Caco-2 (cell line): ENCODE measurements at regions of chr9 and their contacts with region 1.

Region 1: GRCh38 chr9:38371495-38371894 is 21.0 kb upstream of the ALDH1B1 start:
- DNase-seq: peak; percentile 69 to 73
- H3K4me3 ChIP-seq: no peak overlapping the region
- H3K4me3 Mint-ChIP-seq: no peak overlapping the region
- H3K27ac Mint-ChIP-seq: no peak overlapping the region
- H3K4me1 ChIP-seq: no peaks in the 10 kb centered on the region
- H3K4me1 Mint-ChIP-seq: no peaks in the 10 kb centered on the region
- H3K27me3 ChIP-seq: no peaks in the 10 kb centered on the region
- H3K27me3 Mint-ChIP-seq: no peaks in the 10 kb centered on the region
- CTCF ChIP-seq: peak; percentile 63 to 67

Region 2: GRCh38 chr9:38392235-38393127 is 21.0 kb after region 1 on chr9 and contains the start of gene ALDH1B1:
- CTCF ChIA-PET with region 1: no interaction called
- POLR2A ChIA-PET with region 1: no interaction called
- intact Hi-C with region 1: loop called (anchors 2 kb)
- DNase-seq: peak; percentile 89 to 93
- H3K4me3 ChIP-seq: peak within 1 kb of the TSS; percentile 95
- H3K4me3 Mint-ChIP-seq: peak within 1 kb of the TSS; percentile 80
- H3K27ac Mint-ChIP-seq: peak within 1 kb of the TSS; percentile 89
- H3K4me1 ChIP-seq: peaks cover 9% of the 10 kb centered on the region
- H3K4me1 Mint-ChIP-seq: peaks cover 20% of the 10 kb centered on the region
- H3K27me3 ChIP-seq: no peaks in the 10 kb centered on the region
- H3K27me3 Mint-ChIP-seq: no peaks in the 10 kb centered on the region
- CTCF ChIP-seq: peak; percentile 13 to 44
- total RNA-seq, gene ALDH1B1: 35.7 and 38.3 TPM in 2 replicates

Region 3: GRCh38 chr9:38405785-38406184 is 34.3 kb after region 1 on chr9:
- CTCF ChIA-PET with region 1: interaction called, 14 read pairs
- POLR2A ChIA-PET with region 1: no interaction called
- intact Hi-C with region 1: loop called (anchors 1 kb)
- DNase-seq: no peak
- H3K4me3 ChIP-seq: no peak overlapping the region
- H3K4me3 Mint-ChIP-seq: no peak overlapping the region
- H3K27ac Mint-ChIP-seq: no peak overlapping the region
- H3K4me1 ChIP-seq: no peaks in the 10 kb centered on the region
- H3K4me1 Mint-ChIP-seq: no peaks in the 10 kb centered on the region
- H3K27me3 ChIP-seq: no peaks in the 10 kb centered on the region; the same call in 1 of the 2 replicates
- H3K27me3 Mint-ChIP-seq: peaks cover 11% of the 10 kb centered on the region
- CTCF ChIP-seq: no peak

Region 4: DNA sequence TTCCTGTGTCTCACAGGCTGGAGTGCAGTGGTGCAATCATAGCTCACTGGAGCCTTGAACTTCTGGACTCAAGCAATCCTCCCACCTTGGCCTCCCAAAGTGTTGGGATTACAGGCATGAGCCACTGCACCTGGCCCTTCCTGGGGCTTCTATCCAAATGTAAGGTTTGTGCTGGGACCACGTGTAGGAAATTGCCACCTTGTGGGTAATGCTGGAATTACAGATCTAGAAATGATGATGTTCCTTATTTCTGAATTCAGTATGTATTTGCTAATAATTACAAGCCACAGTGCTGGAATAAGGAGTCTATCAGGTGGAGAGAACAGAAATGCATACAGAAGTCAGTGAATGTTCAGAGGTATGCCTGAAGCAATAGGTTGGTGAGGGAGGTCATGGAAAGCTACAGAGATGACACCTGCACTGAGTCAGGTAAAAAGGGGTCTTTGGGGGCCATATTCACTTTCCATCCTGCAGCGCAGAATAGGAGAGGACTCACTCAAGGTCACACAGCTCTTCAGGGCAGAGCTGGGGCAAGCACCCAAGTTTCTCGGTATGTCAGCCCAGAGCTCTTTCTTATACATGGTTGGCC is 61.5 kb after region 1 on chr9:
- CTCF ChIA-PET with region 1: no interaction called
- POLR2A ChIA-PET with region 1: no interaction called
- intact Hi-C with region 1: loop called (anchors 1 kb)
- DNase-seq: peak in 1 of 2 experiments; percentile 35
- H3K4me3 ChIP-seq: no peak overlapping the region
- H3K4me3 Mint-ChIP-seq: no peak overlapping the region
- H3K27ac Mint-ChIP-seq: no peak overlapping the region
- H3K4me1 ChIP-seq: peaks cover 29% of the 10 kb centered on the region
- H3K4me1 Mint-ChIP-seq: peaks cover 41% of the 10 kb centered on the region
- H3K27me3 ChIP-seq: no peaks in the 10 kb centered on the region
- H3K27me3 Mint-ChIP-seq: no peaks in the 10 kb centered on the region
- CTCF ChIP-seq: peak; percentile 36 to 72

Region 5: DNA sequence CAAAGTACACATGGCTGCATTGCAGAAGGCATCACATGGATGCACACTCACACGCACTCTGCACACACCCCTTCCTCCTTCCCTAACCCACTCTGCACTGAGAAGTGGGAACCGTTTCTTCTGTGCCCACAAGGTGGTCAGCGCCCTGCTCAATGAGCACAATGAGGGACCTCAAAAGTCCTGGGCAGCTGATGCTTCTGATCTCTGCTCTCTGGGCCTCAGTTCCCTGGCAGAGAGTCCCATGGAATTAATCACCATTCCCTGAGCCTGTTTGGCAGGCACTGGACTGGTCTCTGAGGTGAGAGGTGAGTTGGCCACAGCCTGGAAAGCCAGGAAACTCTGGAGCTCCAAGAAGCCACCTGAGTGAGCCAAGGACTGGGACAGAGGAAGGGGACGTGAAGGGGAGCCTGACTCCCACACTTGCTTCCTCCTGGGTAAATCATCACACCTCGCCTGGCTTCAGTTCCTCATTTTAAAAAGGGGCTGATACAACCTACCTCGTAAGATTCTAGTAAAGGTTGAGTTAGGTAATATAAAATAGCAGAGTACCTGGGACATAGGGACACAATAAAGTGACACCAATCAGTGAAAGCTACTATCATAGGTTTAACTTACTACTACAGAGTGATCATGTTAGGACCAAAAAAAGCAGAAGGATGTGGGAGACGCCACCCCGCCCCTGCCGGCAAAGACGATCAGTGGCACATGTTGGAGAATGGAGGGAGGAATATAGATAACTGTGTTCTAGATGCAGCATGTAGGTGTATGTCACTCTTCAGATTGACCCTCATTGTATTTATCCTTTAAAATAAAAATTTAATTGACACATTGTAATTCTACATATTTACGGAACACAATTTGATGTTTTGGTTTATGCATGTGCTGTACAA is 73.9 kb after region 1 on chr9:
- CTCF ChIA-PET with region 1: no interaction called
- POLR2A ChIA-PET with region 1: no interaction called
- intact Hi-C with region 1: no loop called
- DNase-seq: no peak
- H3K4me3 ChIP-seq: no peak overlapping the region
- H3K4me3 Mint-ChIP-seq: no peak overlapping the region
- H3K27ac Mint-ChIP-seq: no peak overlapping the region
- H3K4me1 ChIP-seq: peaks cover 17% of the 10 kb centered on the region
- H3K4me1 Mint-ChIP-seq: peaks cover 17% of the 10 kb centered on the region
- H3K27me3 ChIP-seq: no peaks in the 10 kb centered on the region
- H3K27me3 Mint-ChIP-seq: no peaks in the 10 kb centered on the region
- CTCF ChIP-seq: no peak

Region 6: DNA sequence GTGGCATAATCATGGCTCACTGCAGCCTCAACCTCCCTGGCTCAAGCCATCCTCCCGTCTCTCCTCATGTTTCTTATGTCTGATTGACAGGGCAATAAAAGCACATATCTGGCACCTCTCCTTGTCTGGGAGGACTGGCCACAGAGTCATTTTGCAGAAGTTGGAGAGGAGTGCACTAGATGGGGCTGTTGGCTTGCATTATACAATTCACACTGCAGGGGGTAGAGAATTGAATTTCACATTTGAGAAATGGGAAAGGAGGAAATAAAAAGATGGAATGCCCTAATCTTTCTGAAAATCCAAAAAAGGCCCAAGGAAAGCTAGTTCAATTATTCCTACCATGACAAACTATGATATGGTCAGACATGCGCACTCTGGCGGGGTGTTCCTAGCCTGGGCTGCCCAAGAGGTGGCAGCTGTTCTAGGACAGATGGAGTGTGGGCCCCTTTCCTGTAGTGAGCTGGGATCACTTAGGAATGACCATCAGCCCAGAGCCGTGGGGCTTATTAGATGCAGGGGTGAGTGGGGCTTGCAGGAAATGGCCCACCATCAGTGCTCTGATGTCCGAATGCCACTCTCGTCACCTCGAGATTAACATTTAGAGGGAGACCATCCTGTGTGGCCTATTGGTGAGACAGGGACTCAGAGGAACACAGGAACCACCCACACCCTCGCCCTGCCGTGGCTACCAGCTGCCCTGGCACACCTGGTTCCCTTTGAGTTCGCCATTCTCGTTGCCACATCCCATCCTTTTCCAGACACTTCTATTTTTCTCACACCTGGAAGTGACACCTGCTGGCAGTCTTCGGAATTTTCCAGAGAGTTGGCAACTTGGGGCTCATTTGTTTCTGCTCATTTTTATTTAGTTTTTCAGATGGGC is 270.7 kb after region 1 on chr9:
- CTCF ChIA-PET with region 1: no interaction called
- POLR2A ChIA-PET with region 1: no interaction called
- intact Hi-C with region 1: loop called (anchors 10 kb)
- DNase-seq: peak; percentile 45 to 50
- H3K4me3 ChIP-seq: no peak overlapping the region
- H3K4me3 Mint-ChIP-seq: no peak overlapping the region
- H3K27ac Mint-ChIP-seq: no peak overlapping the region
- H3K4me1 ChIP-seq: no peaks in the 10 kb centered on the region
- H3K4me1 Mint-ChIP-seq: peaks cover 4% of the 10 kb centered on the region
- H3K27me3 ChIP-seq: no peaks in the 10 kb centered on the region
- H3K27me3 Mint-ChIP-seq: peaks cover 10% of the 10 kb centered on the region
- CTCF ChIP-seq: peak; percentile 54 to 59